ENCODE measurements at regions of chr1 and their contacts with region 1.

Region 1: DNA sequence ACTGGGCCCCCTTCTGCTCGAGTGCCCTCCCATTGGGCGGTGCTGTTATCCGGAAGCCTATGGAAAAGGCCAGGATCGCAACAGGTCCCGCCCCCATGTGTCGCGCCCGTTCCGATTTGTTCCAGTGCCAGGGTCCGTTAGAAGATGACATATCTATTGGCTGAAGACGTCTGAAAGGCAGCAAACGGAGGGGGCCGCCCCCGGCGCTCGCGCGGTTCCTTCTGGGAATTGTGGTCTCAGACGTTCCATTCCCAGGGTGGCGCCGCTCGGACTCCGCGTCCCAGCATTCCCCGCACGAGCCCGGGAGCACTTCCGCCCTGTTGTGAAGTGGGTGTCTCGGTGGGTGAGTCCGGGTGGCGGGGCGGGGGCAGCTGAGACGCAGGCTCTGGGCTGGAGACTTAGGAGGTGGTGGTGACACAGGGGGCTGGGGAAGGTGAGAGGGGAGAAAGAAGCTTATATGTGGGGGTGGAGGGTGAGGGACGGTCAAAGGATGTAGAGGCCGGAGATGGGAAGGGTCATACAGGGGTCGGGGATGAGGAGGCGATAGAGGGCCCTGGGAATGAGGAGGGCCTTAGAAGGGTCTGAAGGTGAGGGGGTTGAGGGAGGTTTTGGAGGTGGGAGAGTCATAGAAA is at the start of gene ZSCAN20:
- DNase-seq: peak; percentile 98 to 100 (median 99)

Region 2: GRCh38 chr1:33127001-33127791 is 345.3 kb before region 1 on chr1:
- intact Hi-C with region 1: loop called (anchors 2 kb)
- DNase-seq: peak; percentile 94 to 99 (median 96)

Region 3: GRCh38 chr1:33295450-33296081 is 176.9 kb before region 1 on chr1:
- intact Hi-C with region 1: loop called (anchors 1 kb)
- DNase-seq: peak; percentile 84 to 98 (median 94)

Region 4: GRCh38 chr1:33378976-33379375 is 93.5 kb before region 1 on chr1:
- intact Hi-C with region 1: no loop called
- DNase-seq: peak in 2 of 10 donors; percentile 53 to 69

Region 5: GRCh38 chr1:33392639-33393038 is 79.8 kb before region 1 on chr1:
- intact Hi-C with region 1: no loop called
- DNase-seq: peak in 2 of 10 donors; percentile 32 to 49

Region 6: DNA sequence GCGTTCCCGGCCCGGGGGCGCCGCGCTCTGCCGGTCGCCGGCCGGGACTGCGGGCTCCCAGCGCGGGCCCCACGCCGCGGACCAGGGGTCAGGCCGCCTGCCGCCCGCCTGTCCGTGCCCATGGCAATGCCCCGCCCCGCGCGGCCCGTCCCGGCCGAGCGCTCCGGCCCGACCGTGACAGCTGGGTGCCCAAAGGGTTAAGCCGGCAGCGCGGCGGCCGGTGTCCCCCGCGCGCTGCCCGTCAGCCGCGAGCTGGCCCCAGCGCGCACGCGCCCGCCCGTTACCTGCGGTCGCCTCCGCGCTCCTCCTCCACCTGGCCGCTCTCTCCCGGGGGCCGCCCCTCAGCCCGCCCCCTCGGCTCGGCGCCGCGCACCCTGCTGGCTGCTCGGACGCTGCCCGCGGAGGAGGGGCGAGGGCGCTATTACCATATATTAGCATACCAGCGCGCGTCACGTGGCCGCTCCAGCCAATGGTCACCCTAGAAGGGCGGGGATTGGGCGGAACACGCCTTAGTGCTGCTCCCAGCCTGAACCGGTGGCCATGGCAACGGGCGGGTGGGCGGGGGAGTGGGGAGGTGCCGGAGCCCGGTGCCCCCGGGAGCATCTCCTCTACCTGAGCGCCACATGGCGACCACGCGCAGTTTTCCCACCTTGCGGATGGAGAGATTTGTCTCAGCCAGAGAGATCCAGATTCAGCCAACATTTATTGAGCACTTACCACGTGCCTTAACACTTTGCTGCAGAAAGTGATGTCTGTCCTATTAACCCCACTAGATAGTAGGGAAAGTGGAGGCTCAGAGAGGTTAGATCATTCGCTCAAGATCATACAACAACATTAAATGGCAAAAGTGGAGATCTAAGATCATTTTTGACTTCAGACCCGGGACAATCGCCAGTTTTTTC is 41.5 kb before region 1 on chr1 and contains the start of gene PHC2:
- intact Hi-C with region 1: loop called (anchors 5 kb)
- DNase-seq: peak; percentile 98 to 100 (median 100)